ENCODE measurements at regions of chr19 and their contacts with region 1.

Region 1: DNA sequence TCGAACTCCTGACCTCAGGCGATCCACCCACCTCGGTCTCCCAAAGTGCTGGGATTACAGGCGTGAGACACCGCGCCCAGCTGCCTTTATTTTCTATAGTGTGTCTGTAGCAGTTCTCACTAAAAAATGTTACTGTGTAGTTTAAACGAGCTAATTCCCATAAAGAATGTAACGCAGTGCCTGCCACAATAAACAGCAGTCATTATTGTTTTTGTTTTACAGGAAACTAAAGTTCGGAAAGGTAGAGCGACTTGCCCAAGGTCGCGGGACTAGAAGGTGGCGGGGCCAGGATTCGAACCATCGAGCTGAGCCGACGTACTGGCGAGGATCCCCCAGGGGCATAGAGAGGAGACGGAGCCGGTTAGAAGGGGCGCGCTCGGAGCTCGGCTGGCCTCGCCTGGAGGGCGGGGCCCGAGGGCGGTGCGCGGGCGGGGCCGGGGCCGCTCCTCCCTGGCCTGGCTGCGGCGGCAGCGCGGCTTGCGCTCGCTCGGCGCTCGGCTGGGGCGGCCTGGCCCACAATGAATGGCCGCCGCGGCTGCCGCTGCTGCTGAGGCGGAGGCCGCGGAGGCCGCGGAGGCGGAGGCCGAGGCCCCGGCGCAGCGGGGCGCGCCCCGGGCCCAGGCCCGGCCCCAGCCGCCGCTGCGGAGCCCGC is at the start of gene NACC1:
- DNase-seq: peak; percentile 87 to 94 (median 92)
- H3K4me3 ChIP-seq: peak within 1 kb of the TSS; percentile 83 to 97 (median 95)
- H3K27ac ChIP-seq: peak within 1 kb of the TSS; percentile 50 to 83
- H3K4me1 ChIP-seq: peaks cover 0 to 46% (median 36%) of the 10 kb centered on the region in 4 experiments
- H3K27me3 ChIP-seq: no peaks in the 10 kb centered on the region

Region 2: DNA sequence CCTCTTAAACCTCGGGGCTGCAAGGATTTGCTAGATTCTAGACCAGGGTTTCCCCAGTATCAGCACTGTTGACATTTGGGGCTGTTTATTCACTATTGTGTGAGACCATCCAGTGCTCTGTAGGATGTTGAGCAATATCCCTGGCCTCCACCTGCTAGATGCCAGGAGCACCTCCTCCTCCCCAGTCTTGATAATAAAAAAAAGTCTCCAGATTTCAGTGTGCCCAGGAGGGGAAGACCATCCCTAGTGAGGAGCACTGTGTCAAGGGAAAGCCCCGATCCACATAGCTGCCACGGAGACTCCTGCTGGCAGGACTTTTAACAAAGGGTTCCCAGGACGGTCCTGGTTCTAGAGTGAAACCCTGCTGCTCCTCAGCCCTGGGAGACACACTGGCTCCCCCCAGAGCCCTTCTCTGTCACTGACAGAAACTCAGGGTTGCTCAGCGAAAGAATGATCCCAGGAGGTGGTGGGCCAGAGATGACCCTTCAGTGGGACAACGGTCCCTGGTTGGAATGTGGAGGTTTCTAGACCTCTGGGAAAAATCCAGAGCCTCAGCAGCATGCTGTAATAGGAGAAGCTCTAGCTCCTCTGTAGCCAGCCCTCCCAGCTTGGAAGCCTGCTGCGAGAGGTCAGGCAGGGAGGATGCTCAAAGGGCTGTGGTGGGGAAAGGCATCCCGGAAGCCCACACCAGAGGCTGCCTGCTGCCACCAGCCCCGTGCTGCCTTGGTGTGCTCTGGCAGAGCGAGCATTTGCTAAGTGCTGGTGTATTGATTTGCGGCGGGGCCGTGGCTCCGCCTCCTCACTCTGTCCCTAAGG is 35.5 kb before region 1 on chr19:
- CTCF ChIA-PET with region 1: no interaction called
- POLR2A ChIA-PET with region 1: no interaction called
- DNase-seq: peak in 2 of 3 donors; percentile 41 to 42
- H3K4me3 ChIP-seq: no peak overlapping the region
- H3K27ac ChIP-seq: no peak overlapping the region
- H3K4me1 ChIP-seq: peaks cover 0 to 62% (median 51%) of the 10 kb centered on the region in 4 experiments
- H3K27me3 ChIP-seq: no peaks in the 10 kb centered on the region

Region 3: DNA sequence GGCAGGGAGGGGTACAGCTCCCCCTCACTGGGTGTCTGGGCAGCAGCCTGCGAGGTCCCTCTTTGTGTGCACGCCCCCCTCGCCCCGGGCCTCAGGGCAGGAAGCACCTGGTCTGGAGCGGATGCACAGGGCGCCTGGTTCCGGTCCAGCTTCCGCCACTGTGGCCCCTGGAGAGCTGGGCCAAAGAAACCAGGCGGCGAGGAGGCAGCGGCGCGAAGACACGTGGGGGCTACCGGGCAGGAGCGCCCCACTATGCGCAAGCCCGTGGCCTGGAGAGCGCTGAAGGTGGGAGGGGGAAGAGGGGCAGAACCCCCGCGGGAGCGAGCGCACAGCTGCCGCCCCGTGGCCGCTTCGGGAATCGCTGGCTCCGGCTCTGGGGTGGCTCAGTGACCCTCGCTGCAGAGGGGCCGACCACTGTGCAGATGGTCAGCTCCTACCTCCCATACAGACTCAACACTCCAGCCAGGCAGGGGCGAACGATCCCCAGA is 13.5 kb before region 1 on chr19:
- CTCF ChIA-PET with region 1: interaction called, 25 read pairs
- POLR2A ChIA-PET with region 1: interaction called, 18 read pairs
- DNase-seq: peak; percentile 98 to 100 (median 99)
- H3K4me3 ChIP-seq: peak overlapping the region in 6 of 7 experiments; percentile 1 to 100 (median 78)
- H3K27ac ChIP-seq: peak overlapping the region; percentile 90 to 95
- H3K4me1 ChIP-seq: peaks cover 3 to 62% (median 52%) of the 10 kb centered on the region in 4 experiments
- H3K27me3 ChIP-seq: no peaks in the 10 kb centered on the region